Ovary (tissue), 10 donors: ENCODE measurements at regions of chr18 and their contacts with region 1.

Region 1: GRCh38 chr18:2920546-2921343 is 73.9 kb downstream of the EMILIN2 start:
- DNase-seq: no peak
- H3K4me3 ChIP-seq: no peak overlapping the region
- H3K27ac ChIP-seq: no peak overlapping the region
- H3K4me1 ChIP-seq: peaks cover 7% of the 10 kb centered on the region
- H3K27me3 ChIP-seq: no peaks in the 10 kb centered on the region
- CTCF ChIP-seq: no peak
- EP300 ChIP-seq: no peak
- POLR2A ChIP-seq: no peak

Region 2: DNA sequence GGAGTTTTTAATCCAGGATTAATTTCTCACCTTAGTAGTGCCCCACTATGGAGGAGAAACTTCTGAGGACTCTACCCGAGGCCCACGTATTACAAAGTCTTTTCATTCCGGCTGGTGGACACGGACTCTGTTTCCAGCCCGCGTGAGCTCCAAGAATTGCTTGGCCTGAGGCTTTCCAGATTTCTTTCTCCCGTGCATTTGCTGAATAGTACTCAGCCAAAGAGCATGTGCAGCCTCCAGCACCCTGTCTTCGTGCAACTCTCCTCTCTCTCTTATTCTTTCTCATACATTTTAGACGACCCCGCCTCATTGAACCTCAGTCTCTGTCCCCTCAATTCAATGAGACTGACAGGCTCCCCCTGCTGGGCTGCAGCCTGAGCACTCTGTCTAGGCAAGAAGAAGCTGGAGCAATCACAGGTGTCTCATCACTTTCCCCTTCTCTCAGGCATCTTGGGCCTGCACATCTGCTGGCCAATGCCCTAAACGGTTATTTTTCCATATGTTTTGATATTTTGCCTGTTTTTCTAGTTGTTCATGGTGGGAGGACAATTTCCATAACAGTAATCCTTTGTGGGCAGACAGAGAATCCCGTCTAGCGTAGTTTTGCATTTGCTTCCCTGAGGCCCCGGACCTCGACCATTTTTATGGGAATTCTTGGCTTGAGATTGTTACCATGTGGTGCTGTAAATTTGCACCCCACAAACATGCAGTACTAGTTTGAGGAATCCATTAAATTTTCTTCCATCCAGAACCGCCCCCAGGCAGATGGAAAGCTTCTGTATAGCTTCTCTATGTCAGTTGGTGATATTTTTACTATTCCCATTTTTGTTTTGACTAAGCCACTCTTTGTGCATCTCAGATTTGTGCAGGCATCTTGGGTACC is 142.3 kb after region 1 on chr18:
- intact Hi-C with region 1: loop called in 1 of 4 experiments (anchors 10 kb)
- DNase-seq: peak; percentile 59 to 81 (median 71)
- H3K4me3 ChIP-seq: no peak overlapping the region
- H3K27ac ChIP-seq: no peak overlapping the region
- H3K4me1 ChIP-seq: no peaks in the 10 kb centered on the region
- H3K27me3 ChIP-seq: no peaks in the 10 kb centered on the region
- CTCF ChIP-seq: peak in 2 of 3 donors; percentile 51 to 55
- EP300 ChIP-seq: no peak
- POLR2A ChIP-seq: no peak

Region 3: GRCh38 chr18:3119401-3120335 is 198.9 kb after region 1 on chr18:
- intact Hi-C with region 1: loop called in 1 of 4 experiments (anchors 10 kb)
- DNase-seq: no peak
- H3K4me3 ChIP-seq: no peak overlapping the region
- H3K27ac ChIP-seq: no peak overlapping the region
- H3K4me1 ChIP-seq: no peaks in the 10 kb centered on the region
- H3K27me3 ChIP-seq: no peaks in the 10 kb centered on the region
- CTCF ChIP-seq: no peak
- EP300 ChIP-seq: no peak
- POLR2A ChIP-seq: no peak